Heart right ventricle (tissue), 16 donors: ENCODE measurements at regions of chr9 and their contacts with region 1.

Region 1: GRCh38 chr9:34463098-34463900 is 4.7 kb downstream of the DNAI1 start:
- DNase-seq: no peak
- ATAC-seq: no peak
- H3K4me3 ChIP-seq: no peak overlapping the region
- H3K27ac ChIP-seq: no peak overlapping the region
- H3K4me1 ChIP-seq: peaks cover 0 to 16% (median 3%) of the 10 kb centered on the region in 9 donors
- H3K27me3 ChIP-seq: peaks cover 0 to 8% (median 0%) of the 10 kb centered on the region in 7 donors
- CTCF ChIP-seq: no peak

Region 2: GRCh38 chr9:34291023-34291422 is 172.3 kb before region 1 on chr9:
- intact Hi-C with region 1: no loop called
- DNase-seq: no peak
- ATAC-seq: peak in 3 of 8 donors; percentile 38 to 47 (median 46)
- H3K4me3 ChIP-seq: no peak overlapping the region
- H3K27ac ChIP-seq: peak overlapping the region in 1 of 10 donors; percentile 74
- H3K4me1 ChIP-seq: peaks cover 0 to 16% (median 0%) of the 10 kb centered on the region in 9 donors
- H3K27me3 ChIP-seq: no peaks in the 10 kb centered on the region
- CTCF ChIP-seq: no peak

Region 3: DNA sequence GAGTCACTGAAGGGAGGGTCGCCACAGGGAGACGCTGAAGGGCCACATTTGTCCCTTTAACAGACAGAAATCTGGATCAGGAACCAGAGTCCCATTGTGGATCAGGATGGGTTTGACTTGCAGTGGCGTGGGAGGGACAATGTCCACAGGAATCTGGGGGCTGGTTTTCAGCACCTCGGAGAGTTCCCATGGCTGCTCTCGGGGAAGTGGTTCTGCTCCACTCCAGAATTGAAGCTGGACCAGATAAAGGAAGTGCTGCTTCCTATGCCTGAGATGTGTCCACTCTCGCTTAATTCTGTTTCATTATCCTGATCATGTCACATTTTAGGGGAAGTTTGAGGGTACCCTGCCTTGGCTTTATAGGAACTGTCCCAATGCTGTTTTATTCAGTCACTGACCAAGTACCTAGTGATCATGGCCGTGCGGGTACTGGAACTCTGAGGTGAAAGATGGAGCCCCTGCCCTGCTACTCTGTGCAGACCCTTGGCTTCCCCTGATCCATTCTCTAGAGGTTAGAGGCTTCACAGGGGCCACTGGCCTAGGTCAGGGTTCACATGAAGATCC is 30.8 kb after region 1 on chr9:
- intact Hi-C with region 1: loop called in 1 of 10 experiments (anchors 5 kb)
- DNase-seq: peak; percentile 57 to 70
- ATAC-seq: peak in 7 of 8 donors; percentile 46 to 80 (median 71)
- H3K4me3 ChIP-seq: no peak overlapping the region
- H3K27ac ChIP-seq: no peak overlapping the region
- H3K4me1 ChIP-seq: no peaks in the 10 kb centered on the region
- H3K27me3 ChIP-seq: no peaks in the 10 kb centered on the region
- CTCF ChIP-seq: no peak